H1 (cell line): ENCODE measurements at regions of chr1 and their contacts with region 1.

Region 1: DNA sequence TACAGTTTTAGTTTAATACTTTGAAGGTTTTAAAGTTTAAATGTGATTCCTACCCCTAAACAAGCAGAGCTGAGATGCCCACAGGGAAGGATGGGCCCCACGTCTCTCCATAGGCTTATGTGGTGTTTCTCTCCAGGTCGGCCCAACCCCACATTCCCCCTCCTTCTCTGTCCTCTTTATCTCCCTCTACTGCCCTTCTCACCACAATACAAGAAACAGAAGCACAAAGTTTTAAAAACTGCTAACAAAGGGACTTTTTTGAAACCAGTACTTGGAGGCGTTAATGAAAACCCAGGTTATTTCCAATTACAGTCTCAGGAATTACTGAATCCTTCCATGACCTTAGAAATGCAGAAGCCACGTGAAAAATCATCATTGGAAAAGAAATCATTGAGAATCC is 324.0 kb downstream of the NTNG1 start:
- DNase-seq: peak in 1 of 2 experiments; percentile 9
- H3K4me3 ChIP-seq: no peak overlapping the region
- H3K27ac ChIP-seq: no peak overlapping the region
- H3K4me1 ChIP-seq: no peaks in the 10 kb centered on the region
- H3K27me3 ChIP-seq: no peaks in the 10 kb centered on the region
- CTCF ChIP-seq: peak; percentile 16 to 42 (median 25); a peak in 3 of 4 replicates
- EP300 ChIP-seq: no peak
- POLR2A ChIP-seq: no peak
- RAD21 ChIP-seq: peak; percentile 39 to 58

Region 2: DNA sequence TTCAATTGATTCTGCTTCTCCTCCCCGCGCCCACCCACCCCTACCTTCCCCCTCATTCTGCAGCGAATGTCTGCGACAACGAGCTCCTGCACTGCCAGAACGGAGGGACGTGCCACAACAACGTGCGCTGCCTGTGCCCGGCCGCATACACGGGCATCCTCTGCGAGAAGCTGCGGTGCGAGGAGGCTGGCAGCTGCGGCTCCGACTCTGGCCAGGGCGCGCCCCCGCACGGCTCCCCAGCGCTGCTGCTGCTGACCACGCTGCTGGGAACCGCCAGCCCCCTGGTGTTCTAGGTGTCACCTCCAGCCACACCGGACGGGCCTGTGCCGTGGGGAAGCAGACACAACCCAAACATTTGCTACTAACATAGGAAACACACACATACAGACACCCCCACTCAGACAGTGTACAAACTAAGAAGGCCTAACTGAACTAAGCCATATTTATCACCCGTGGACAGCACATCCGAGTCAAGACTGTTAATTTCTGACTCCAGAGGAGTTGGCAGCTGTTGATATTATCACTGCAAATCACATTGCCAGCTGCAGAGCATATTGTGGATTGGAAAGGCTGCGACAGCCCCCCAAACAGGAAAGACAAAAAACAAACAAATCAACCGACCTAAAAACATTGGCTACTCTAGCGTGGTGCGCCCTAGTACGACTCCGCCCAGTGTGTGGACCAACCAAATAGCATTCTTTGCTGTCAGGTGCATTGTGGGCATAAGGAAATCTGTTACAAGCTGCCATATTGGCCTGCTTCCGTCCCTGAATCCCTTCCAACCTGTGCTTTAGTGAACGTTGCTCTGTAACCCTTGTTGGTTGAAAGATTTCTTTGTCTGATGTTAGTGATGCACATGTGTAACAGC is 16.0 kb after region 1 on chr1:
- CTCF ChIA-PET with region 1: interaction called, 44 read pairs
- POLR2A ChIA-PET with region 1: no interaction called
- DNase-seq: no peak
- H3K4me3 ChIP-seq: no peak overlapping the region
- H3K27ac ChIP-seq: no peak overlapping the region
- H3K4me1 ChIP-seq: no peaks in the 10 kb centered on the region
- H3K27me3 ChIP-seq: no peaks in the 10 kb centered on the region
- CTCF ChIP-seq: no peak
- EP300 ChIP-seq: no peak
- POLR2A ChIP-seq: no peak
- RAD21 ChIP-seq: no peak